ENCODE measurements at regions of chr18 and their contacts with region 1.

Region 1: GRCh38 chr18:35240664-35241447 is at the start of gene ZNF397:
- DNase-seq: peak; percentile 90 to 94
- H3K4me3 ChIP-seq: peak within 1 kb of the TSS; percentile 61 to 78 (median 74)
- H3K27ac ChIP-seq: peak within 1 kb of the TSS; percentile 91
- H3K4me1 ChIP-seq: peaks cover 0 to 3% (median 0%) of the 10 kb centered on the region in 4 experiments; a peak in 2 of 7 replicates
- H3K27me3 ChIP-seq: no peaks in the 10 kb centered on the region
- CTCF ChIP-seq: no peak
- EP300 ChIP-seq: no peak
- POLR2A ChIP-seq: peak; percentile 95
- RAD21 ChIP-seq: no peak
- total RNA-seq, gene ZNF397: 38.9 and 39.5 TPM in 2 replicates

Region 2: GRCh38 chr18:35071819-35072247 is 169.0 kb before region 1 on chr18:
- CTCF ChIA-PET with region 1: no interaction called
- POLR2A ChIA-PET with region 1: no interaction called
- DNase-seq: no peak
- H3K4me3 ChIP-seq: no peak overlapping the region
- H3K27ac ChIP-seq: no peak overlapping the region
- H3K4me1 ChIP-seq: peaks cover 0 to 3% (median 2%) of the 10 kb centered on the region in 4 experiments; a peak in 4 of 7 replicates
- H3K27me3 ChIP-seq: no peaks in the 10 kb centered on the region
- CTCF ChIP-seq: no peak
- EP300 ChIP-seq: no peak
- POLR2A ChIP-seq: no peak
- RAD21 ChIP-seq: no peak

Region 3: GRCh38 chr18:35253655-35254287 is 12.9 kb after region 1 on chr18:
- CTCF ChIA-PET with region 1: no interaction called
- POLR2A ChIA-PET with region 1: interaction called, 16 read pairs
- DNase-seq: no peak
- H3K4me3 ChIP-seq: no peak overlapping the region
- H3K27ac ChIP-seq: no peak overlapping the region
- H3K4me1 ChIP-seq: no peaks in the 10 kb centered on the region
- H3K27me3 ChIP-seq: no peaks in the 10 kb centered on the region
- CTCF ChIP-seq: no peak
- EP300 ChIP-seq: no peak
- POLR2A ChIP-seq: no peak
- RAD21 ChIP-seq: no peak

Region 4: DNA sequence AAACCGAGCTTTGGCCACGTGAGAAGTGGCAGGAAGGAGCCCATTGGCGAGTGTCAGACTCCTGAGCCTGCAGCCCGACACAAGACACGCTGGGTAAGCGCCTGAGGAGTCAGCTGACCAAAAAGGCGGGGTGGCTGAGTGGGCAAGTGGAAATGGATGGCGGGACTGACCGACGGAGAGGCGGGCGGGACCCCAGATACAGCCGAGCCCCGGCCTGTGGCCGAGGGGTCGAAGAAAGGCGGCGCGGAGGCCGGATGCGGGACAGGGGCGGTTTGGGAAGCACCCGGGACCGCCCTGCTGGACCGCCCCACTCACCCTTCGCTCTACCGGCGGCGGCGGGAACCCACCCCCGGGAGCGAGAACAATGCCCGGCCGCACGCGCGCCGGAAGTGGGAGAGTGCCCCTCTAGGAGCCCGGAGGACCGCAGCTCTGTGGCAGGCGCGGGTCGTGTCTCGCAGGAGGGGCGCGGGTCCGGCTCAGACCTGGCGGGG is 26.4 kb after region 1 on chr18:
- CTCF ChIA-PET with region 1: no interaction called
- POLR2A ChIA-PET with region 1: interaction called, 17 read pairs
- DNase-seq: no peak
- H3K4me3 ChIP-seq: peak overlapping the region in 3 of 4 experiments; percentile 17 to 36 (median 36); a peak in 4 of 8 replicates
- H3K27ac ChIP-seq: no peak overlapping the region
- H3K4me1 ChIP-seq: no peaks in the 10 kb centered on the region; a peak in 1 of 7 replicates
- H3K27me3 ChIP-seq: no peaks in the 10 kb centered on the region
- CTCF ChIP-seq: no peak
- EP300 ChIP-seq: no peak
- POLR2A ChIP-seq: no peak
- RAD21 ChIP-seq: no peak

Region 5: GRCh38 chr18:35343936-35344735 is 103.3 kb after region 1 on chr18 and contains the start of gene ZNF24:
- CTCF ChIA-PET with region 1: no interaction called
- POLR2A ChIA-PET with region 1: interaction called, 10 read pairs
- DNase-seq: peak; percentile 68 to 94
- H3K4me3 ChIP-seq: peak within 1 kb of the TSS; percentile 91 to 97 (median 92)
- H3K27ac ChIP-seq: peak within 1 kb of the TSS; percentile 98
- H3K4me1 ChIP-seq: peaks cover 0 to 5% (median 1%) of the 10 kb centered on the region in 4 experiments; a peak in 3 of 7 replicates
- H3K27me3 ChIP-seq: no peaks in the 10 kb centered on the region
- CTCF ChIP-seq: no peak
- EP300 ChIP-seq: no peak; a peak in 1 of 3 replicates
- POLR2A ChIP-seq: peak; percentile 87 to 92
- RAD21 ChIP-seq: 0 out of 4 replicates have a peak, but pooled peaks of 1 of the 2 experiments have one; percentile 1
- total RNA-seq, gene ZNF24: 56.9 and 60.1 TPM in 2 replicates

Measured in H1 (cell line).